SK-N-SH (cell line): ENCODE measurements at regions of chr7 and their contacts with region 1.

Region 1: GRCh38 chr7:135281363-135281949 is 47.8 kb downstream of the STRA8 start:
- DNase-seq: peak; percentile 91
- H3K4me3 ChIP-seq: no peak overlapping the region; a peak in 1 of 4 replicates
- H3K27ac ChIP-seq: no peak overlapping the region
- H3K4me1 ChIP-seq: no peaks in the 10 kb centered on the region
- H3K27me3 ChIP-seq: no peaks in the 10 kb centered on the region; the same call in 1 of the 2 replicates
- CTCF ChIP-seq: peak; percentile 100
- EP300 ChIP-seq: no peak; a peak in 1 of 4 replicates
- RAD21 ChIP-seq: peak; percentile 100

Region 2: DNA sequence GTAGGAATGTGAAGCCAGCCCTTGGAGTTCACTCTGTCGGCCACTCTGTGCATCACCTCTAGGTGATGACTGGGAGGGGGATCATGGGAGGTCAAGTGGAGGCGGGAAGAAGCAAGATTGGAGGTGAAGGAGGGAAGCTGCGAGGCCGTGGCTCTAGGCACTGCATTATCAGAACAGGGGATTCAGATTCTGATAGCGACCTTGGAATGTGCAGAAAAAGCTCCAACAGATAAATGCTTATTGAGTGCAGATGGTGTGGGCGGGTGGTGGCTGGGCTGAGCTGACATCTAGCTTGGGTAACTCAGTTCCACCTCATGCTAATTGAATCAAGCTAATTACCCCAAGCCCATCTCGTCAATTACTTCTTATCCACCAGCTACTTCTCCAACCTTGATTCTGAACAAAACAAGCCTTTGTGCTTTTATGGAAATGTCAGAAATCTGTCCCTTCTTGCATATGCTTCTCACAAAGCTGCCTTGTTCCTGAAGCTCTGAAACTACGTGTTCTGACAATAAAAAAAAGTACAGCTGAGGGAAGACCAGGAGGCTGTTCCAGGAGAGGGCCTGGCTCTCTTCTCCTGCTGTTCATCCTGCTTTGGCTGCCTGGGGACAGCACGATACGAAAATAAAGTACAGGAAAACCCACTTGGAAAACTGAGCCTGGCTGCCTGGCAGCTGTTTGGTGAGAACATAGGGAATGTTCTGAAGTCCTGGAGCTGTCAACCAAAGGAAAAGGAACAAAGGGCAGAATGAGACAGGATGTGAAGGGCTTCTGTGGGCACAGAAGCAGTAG is 20.3 kb before region 1 on chr7:
- CTCF ChIA-PET with region 1: interaction called, 12 read pairs
- POLR2A ChIA-PET with region 1: no interaction called
- DNase-seq: peak; percentile 57
- H3K4me3 ChIP-seq: no peak overlapping the region
- H3K27ac ChIP-seq: no peak overlapping the region
- H3K4me1 ChIP-seq: peaks cover 0 to 14% of the 10 kb centered on the region in 2 experiments; a peak in 1 of 4 replicates
- H3K27me3 ChIP-seq: no peaks in the 10 kb centered on the region
- CTCF ChIP-seq: no peak
- EP300 ChIP-seq: no peak
- RAD21 ChIP-seq: no peak

Region 3: GRCh38 chr7:135300913-135301765 is 19.7 kb after region 1 on chr7:
- CTCF ChIA-PET with region 1: interaction called, 15 read pairs
- POLR2A ChIA-PET with region 1: no interaction called
- DNase-seq: no peak
- H3K4me3 ChIP-seq: no peak overlapping the region
- H3K27ac ChIP-seq: no peak overlapping the region
- H3K4me1 ChIP-seq: peaks cover 0 to 6% of the 10 kb centered on the region in 2 experiments; a peak in 1 of 4 replicates
- H3K27me3 ChIP-seq: 0 out of 2 replicates have a peak, but pooled peaks cover 3% of the 10 kb centered on the region
- CTCF ChIP-seq: no peak
- EP300 ChIP-seq: no peak
- RAD21 ChIP-seq: no peak

Region 4: GRCh38 chr7:135326636-135327280 is 45.3 kb after region 1 on chr7:
- CTCF ChIA-PET with region 1: interaction called, 737 read pairs
- POLR2A ChIA-PET with region 1: no interaction called
- DNase-seq: no peak
- H3K4me3 ChIP-seq: no peak overlapping the region
- H3K27ac ChIP-seq: peak overlapping the region in 1 of 2 experiments; percentile 43; a peak in 1 of 4 replicates
- H3K4me1 ChIP-seq: peaks cover 0 to 30% of the 10 kb centered on the region in 2 experiments; a peak in 2 of 4 replicates
- H3K27me3 ChIP-seq: no peaks in the 10 kb centered on the region
- CTCF ChIP-seq: no peak
- EP300 ChIP-seq: no peak
- RAD21 ChIP-seq: no peak

Region 5: DNA sequence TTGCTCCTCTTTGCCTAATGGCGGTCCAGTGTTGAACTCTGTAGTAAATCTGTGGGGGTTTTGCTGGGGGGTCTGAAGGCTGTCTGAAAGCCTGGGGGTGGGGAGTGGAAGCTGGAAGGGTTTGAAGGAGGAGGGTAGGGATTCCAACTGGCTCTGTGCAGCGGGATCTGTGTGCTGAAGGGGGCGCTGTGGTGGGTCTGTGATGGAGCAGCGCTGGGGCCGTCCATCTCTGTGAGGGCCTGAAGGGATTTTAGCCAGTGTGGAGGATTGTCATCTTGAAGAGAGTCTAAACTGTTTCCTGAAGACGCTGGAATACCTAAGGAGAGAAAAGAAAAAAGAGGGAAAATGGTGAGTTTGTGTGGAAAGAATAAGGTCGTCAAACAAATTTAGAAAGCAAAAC is 81.4 kb after region 1 on chr7:
- CTCF ChIA-PET with region 1: interaction called, 23 read pairs
- POLR2A ChIA-PET with region 1: no interaction called
- DNase-seq: no peak
- H3K4me3 ChIP-seq: no peak overlapping the region
- H3K27ac ChIP-seq: no peak overlapping the region
- H3K4me1 ChIP-seq: peaks cover 0 to 5% of the 10 kb centered on the region in 2 experiments; a peak in 1 of 4 replicates
- H3K27me3 ChIP-seq: no peaks in the 10 kb centered on the region
- CTCF ChIP-seq: peak; percentile 33
- EP300 ChIP-seq: no peak
- RAD21 ChIP-seq: no peak

Region 6: DNA sequence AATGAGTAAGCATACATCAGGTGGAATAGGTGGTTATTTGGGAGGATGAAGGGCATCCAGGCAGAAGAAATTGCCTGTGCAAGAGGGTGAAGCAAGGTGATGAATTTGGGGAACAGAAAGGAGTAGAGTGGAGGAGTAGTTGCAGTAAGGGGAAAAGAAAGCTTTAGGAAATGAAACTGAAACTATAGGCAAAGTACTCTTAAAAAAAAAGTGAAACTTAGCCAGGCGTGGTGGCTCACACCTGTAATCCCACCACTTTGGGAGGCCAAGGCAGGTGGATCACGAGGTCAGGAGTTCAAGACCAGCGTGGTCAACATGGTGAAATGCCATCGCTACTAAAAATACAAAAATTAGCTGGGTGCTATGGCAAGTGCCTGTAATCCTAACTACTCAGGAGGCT is 293.8 kb after region 1 on chr7:
- CTCF ChIA-PET with region 1: interaction called, 11 read pairs
- POLR2A ChIA-PET with region 1: no interaction called
- DNase-seq: no peak
- H3K4me3 ChIP-seq: no peak overlapping the region
- H3K27ac ChIP-seq: no peak overlapping the region
- H3K4me1 ChIP-seq: no peaks in the 10 kb centered on the region
- H3K27me3 ChIP-seq: no peaks in the 10 kb centered on the region
- CTCF ChIP-seq: no peak
- EP300 ChIP-seq: no peak
- RAD21 ChIP-seq: no peak

Region 7: GRCh38 chr7:135662373-135663114 is 381.1 kb after region 1 on chr7 and contains the start of gene STMP1:
- CTCF ChIA-PET with region 1: interaction called, 14 read pairs
- POLR2A ChIA-PET with region 1: no interaction called
- DNase-seq: peak; percentile 100
- H3K4me3 ChIP-seq: peak within 1 kb of the TSS; percentile 73 to 96
- H3K27ac ChIP-seq: peak within 1 kb of the TSS; percentile 92 to 97
- H3K4me1 ChIP-seq: peaks cover 10 to 11% of the 10 kb centered on the region in 2 experiments
- H3K27me3 ChIP-seq: no peaks in the 10 kb centered on the region
- CTCF ChIP-seq: no peak
- EP300 ChIP-seq: peak; percentile 20 to 40; a peak in 2 of 4 replicates
- RAD21 ChIP-seq: peak; percentile 62
- polyA plus RNA-seq, gene STMP1: 26.0 and 30.0 TPM in 2 replicates